Breast epithelium (tissue), 4 donors: ENCODE measurements at regions of chrX and their contacts with region 1.

Region 1: DNA sequence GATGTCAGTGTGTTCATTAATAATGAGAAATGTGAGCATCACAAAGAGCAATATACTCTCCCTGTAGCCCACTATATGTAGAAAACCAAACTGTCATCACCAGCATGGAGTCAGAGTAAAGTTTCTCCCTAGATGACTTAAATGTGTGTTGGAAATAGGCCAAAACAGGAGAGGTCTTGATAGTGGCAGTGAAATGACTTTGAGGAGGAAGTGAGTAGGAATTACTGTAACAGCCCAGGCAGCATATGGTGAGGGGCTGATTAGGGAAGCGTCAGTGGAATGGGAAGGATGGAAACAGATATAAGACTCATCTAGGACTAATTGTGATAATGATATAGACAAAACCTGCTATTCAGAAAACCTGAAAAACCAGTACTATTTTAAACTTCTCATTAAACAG is 83.9 kb downstream of the ATXN3L start:
- DNase-seq: no peak
- H3K4me3 ChIP-seq: no peak overlapping the region
- H3K27ac ChIP-seq: no peak overlapping the region
- H3K4me1 ChIP-seq: no peaks in the 10 kb centered on the region
- H3K27me3 ChIP-seq: peaks cover 0 to 48% of the 10 kb centered on the region in 2 donors
- CTCF ChIP-seq: no peak
- POLR2A ChIP-seq: no peak

Region 2: DNA sequence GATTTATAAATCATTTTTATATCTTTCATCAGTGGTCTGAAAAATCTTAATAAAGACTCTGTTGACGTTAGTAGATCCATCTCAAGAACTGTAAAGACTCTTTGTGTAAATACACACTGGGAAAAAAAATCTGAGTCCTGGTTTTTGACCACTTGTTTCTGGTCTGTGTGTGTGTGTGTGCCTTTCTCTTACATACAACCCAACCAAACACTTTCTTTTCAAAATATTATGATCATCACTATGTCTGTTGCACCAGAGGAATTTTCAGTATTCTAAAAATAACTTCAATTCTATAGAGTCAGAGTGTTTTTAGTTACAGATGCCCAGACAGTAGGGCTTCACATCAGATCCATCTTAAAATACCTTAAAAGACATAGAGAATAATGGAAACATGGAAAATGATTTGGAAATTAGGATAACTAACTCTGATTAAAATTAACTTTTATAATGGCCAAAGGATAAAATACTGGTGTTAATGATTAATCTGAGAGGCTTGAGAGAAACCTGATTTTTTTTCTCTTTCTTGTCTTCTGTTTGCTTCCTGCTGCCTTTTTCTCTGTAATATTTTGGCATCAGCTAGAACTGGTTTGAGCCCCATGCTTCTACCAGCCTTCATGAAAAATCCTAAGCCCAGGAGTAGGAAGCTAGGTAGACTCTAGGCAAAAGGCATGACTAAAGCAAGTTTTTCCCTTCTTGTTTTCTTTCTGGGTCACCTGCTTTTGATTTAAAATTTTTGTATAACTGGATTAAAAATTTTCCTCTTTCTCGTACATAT is 15.8 kb before region 1 on chrX:
- intact Hi-C with region 1: loop called (anchors 2 kb)
- DNase-seq: no peak
- H3K4me3 ChIP-seq: no peak overlapping the region
- H3K27ac ChIP-seq: no peak overlapping the region
- H3K4me1 ChIP-seq: no peaks in the 10 kb centered on the region
- H3K27me3 ChIP-seq: peaks cover 0 to 28% of the 10 kb centered on the region in 2 donors
- CTCF ChIP-seq: no peak
- POLR2A ChIP-seq: no peak

Region 3: DNA sequence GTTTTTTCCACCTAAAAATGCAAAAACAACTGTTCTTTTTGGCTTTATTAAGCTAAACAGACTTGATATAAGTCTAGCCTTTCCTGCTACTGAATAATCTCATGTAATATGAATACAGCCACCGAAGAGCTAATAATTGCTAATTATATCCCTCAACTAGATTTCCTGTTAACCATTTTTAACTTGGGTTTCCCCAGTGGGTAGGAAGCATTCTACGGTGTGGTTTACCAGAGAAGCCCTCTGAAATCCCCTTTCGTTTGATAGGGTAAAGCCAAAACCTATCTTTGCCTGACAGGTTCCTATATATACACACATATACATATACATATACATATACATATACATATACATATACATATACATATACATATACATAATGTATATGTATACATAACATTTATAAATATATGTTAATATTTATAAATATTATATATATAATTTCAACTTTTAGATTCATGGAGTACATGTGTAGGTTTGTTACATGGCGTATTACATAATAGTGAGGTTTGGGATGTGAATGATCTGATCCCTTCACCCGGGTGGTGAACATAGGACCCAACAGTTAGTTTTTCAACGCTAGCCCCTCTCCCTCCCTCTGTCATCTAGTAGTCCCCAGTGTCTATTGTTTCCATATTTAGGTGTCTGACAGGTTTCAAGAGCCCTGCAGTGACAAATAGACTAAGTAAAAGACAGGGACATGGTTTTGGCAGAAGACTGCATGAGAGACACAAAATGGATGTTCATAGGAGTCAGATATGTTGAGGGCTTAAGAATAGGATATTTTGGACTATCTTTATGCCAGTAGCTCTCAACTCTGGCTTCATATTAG is 21.5 kb after region 1 on chrX:
- intact Hi-C with region 1: loop called (anchors 1 kb)
- DNase-seq: no peak
- H3K4me3 ChIP-seq: no peak overlapping the region
- H3K27ac ChIP-seq: no peak overlapping the region
- H3K4me1 ChIP-seq: no peaks in the 10 kb centered on the region
- H3K27me3 ChIP-seq: peaks cover 0 to 43% of the 10 kb centered on the region in 2 donors
- CTCF ChIP-seq: no peak
- POLR2A ChIP-seq: no peak